Activated naive CD4-positive, alpha-beta T cell treated with anti-CD3 and anti-CD28 coated beads, Interleukin-2, amount 10 ng/mL, durations not matched to agents 7 days and 5 days (primary cell): ENCODE measurements at regions of chr7 and their contacts with region 1.

Region 1: DNA sequence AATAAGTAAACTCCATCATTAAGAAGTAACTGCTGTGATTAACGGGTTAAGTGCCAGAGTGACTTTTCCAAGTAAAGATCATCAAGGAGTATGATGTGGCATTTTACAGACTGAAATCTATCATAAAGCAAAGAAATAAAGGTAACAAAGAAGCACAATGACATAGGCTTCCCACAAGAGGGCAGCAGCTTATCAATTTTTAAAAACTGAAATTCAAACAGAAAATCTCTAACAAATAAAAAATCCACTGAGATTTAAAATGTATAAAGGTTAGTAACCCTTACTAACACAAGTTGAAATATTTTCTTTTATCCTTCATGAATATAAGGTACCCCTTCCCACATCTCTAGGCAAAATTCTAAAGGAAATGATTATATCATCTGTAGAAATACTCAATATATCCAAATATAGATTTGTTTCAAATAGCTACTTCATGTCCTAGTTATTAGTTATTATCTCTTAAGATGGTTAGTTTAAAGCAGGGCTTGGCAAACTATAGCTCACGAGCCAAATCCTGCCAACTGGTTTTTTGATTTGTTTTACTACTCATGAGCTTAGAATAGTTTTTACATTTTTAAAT is 29.2 kb downstream of the FAM3C start:
- DNase-seq: peak; percentile 37
- H3K4me3 Mint-ChIP-seq: no peak overlapping the region
- H3K27ac Mint-ChIP-seq: no peak overlapping the region
- H3K4me1 Mint-ChIP-seq: peaks cover 18% of the 10 kb centered on the region
- H3K27me3 Mint-ChIP-seq: no peaks in the 10 kb centered on the region

Region 2: GRCh38 chr7:121341933-121342332 is 25.0 kb before region 1 on chr7:
- CTCF ChIA-PET with region 1: no interaction called
- DNase-seq: no peak
- H3K4me3 Mint-ChIP-seq: no peak overlapping the region
- H3K27ac Mint-ChIP-seq: no peak overlapping the region
- H3K4me1 Mint-ChIP-seq: no peaks in the 10 kb centered on the region
- H3K27me3 Mint-ChIP-seq: no peaks in the 10 kb centered on the region

Region 3: GRCh38 chr7:121395961-121396757 is 29.2 kb after region 1 on chr7 and contains the start of gene FAM3C:
- CTCF ChIA-PET with region 1: interaction called, 58 read pairs
- DNase-seq: peak; percentile 77
- H3K4me3 Mint-ChIP-seq: peak within 1 kb of the TSS; percentile 85
- H3K27ac Mint-ChIP-seq: peak within 1 kb of the TSS; percentile 82
- H3K4me1 Mint-ChIP-seq: peaks cover 28% of the 10 kb centered on the region
- H3K27me3 Mint-ChIP-seq: no peaks in the 10 kb centered on the region

Region 4: DNA sequence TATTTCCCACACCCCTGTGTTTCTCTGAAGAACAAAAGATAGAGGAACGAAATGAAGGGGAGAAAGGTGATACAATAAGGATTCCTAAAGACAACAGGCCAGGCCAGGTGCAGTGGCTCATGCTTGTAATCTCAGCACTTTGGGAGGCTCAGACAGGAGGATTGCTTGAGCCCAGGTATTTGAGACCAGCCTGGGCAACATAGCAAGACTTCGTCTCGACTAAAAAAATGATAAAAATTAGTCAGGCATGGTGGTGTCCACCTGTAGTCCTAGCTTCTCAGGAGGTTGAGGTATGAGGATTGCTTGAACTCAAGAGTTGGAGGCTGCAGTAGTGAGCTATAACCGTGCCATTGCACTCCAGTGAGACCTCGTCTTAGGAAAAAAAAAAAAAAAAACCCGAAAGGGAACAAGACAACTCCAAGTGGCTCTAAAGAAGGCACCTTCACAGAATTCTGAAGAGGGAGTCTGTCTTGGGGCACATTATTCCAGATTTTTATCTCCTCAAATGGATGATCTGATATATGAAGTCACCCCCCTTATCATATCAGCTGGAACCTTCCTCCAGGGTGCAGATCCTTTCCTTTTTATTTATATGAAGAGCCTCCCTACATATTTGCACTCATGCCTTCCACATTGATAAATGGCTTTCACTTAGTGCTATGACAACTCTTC is 70.7 kb after region 1 on chr7:
- CTCF ChIA-PET with region 1: interaction called, 13 read pairs
- DNase-seq: no peak
- H3K4me3 Mint-ChIP-seq: peak overlapping the region; percentile 47
- H3K27ac Mint-ChIP-seq: peak overlapping the region; percentile 92
- H3K4me1 Mint-ChIP-seq: peaks cover 43% of the 10 kb centered on the region
- H3K27me3 Mint-ChIP-seq: no peaks in the 10 kb centered on the region

Region 5: DNA sequence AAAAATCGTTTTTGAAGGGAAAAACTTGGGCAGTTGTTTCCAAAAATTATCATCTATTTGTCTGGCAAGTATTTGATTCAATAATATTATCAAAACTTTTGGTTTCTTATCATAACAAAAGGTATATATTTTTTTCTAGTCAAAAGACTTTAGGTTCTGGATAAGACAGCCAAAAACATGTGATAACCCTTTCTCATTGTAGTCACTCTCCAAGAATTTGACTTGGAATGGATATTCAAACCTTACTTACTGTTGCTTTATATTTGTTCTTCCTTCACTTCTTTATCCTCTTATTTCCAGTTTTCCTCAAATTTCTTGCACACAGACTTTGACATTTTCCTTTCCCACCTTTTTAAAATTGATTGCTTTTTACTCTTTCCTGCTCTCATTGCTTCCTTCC is 170.1 kb after region 1 on chr7:
- CTCF ChIA-PET with region 1: no interaction called
- DNase-seq: no peak
- H3K4me3 Mint-ChIP-seq: no peak overlapping the region
- H3K27ac Mint-ChIP-seq: no peak overlapping the region
- H3K4me1 Mint-ChIP-seq: peaks cover 9% of the 10 kb centered on the region
- H3K27me3 Mint-ChIP-seq: no peaks in the 10 kb centered on the region

Region 6: DNA sequence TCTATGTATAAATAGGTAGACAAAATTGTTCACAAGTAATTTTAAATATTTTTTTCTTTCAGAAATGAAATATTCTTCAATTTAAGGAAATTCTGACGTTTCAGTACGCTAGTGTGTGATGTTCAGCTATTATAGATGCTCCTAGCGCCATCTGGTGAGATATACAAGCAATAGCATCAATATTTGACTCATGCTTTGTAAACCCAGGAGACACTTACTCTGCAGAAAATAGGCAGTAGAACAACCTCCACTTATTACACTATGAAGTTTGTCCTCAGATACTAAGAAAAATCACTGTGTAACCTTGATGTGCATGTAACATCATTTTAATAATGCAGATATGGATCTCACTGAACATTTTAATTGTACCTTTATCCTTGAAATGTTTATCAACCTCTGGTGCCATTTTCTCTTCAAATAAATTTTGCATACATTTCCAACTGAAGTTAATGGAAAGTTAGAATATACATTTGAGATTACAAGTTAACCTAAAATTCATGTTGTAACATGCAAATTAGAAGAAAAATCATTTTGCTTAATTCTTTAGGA is 180.7 kb after region 1 on chr7:
- CTCF ChIA-PET with region 1: interaction called, 71 read pairs
- DNase-seq: no peak
- H3K4me3 Mint-ChIP-seq: no peak overlapping the region
- H3K27ac Mint-ChIP-seq: no peak overlapping the region
- H3K4me1 Mint-ChIP-seq: peaks cover 33% of the 10 kb centered on the region
- H3K27me3 Mint-ChIP-seq: peaks cover 6% of the 10 kb centered on the region

Region 7: GRCh38 chr7:121994625-121995410 is 627.9 kb after region 1 on chr7:
- CTCF ChIA-PET with region 1: interaction called, 11 read pairs
- DNase-seq: peak; percentile 55
- H3K4me3 Mint-ChIP-seq: no peak overlapping the region
- H3K27ac Mint-ChIP-seq: no peak overlapping the region
- H3K4me1 Mint-ChIP-seq: no peaks in the 10 kb centered on the region
- H3K27me3 Mint-ChIP-seq: no peaks in the 10 kb centered on the region